Activated CD4-positive, alpha-beta memory T cell treated with anti-CD3 and anti-CD28 coated beads, Interleukin-2, amount 10 ng/mL, durations not matched to agents 7 days and 5 days (primary cell): ENCODE measurements at regions of chr2 and their contacts with region 1.

Region 1: DNA sequence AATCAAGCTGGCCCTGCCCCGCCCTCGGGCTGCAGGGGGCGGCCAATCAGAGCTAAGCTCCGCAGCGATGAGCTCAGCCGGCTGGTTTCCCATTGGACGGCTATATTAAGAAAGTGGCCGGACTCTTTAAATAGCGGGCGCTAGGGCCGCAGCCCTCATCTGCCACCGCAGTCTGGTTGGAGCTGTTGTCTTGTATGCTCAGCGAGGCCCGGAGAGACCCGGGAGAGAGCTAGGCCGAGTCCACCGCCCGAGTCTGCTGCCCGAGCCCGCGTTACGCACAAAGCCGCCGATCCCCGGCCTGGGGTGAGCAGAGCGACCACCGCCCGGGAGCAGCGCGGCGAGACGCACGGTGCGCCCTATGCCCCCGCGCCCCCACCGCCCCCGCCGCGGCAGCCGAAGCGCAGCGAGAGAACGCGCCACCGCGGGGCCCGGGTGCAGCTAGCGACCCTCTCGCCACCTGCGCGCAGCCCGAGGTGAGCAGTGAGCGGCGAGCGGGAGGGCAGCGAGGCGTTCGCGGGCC is at the start of gene RHOB:
- DNase-seq: peak; percentile 93
- H3K4me3 Mint-ChIP-seq: peak within 1 kb of the TSS; percentile 74
- H3K27ac Mint-ChIP-seq: no peak within 1 kb of the TSS
- H3K4me1 Mint-ChIP-seq: peaks cover 10% of the 10 kb centered on the region
- H3K27me3 Mint-ChIP-seq: peaks cover 41% of the 10 kb centered on the region
- total RNA-seq, gene RHOB: 14.0 to 14.4 TPM

Region 2: GRCh38 chr2:20424300-20425290 is 22.4 kb before region 1 on chr2:
- CTCF ChIA-PET with region 1: interaction called, 17 read pairs
- POLR2A ChIA-PET with region 1: interaction called, 7 read pairs
- DNase-seq: peak; percentile 58
- H3K4me3 Mint-ChIP-seq: peak overlapping the region; percentile 3
- H3K27ac Mint-ChIP-seq: peak overlapping the region; percentile 68
- H3K4me1 Mint-ChIP-seq: peaks cover 44% of the 10 kb centered on the region
- H3K27me3 Mint-ChIP-seq: peaks cover 4% of the 10 kb centered on the region

Region 3: GRCh38 chr2:20474757-20475566 is 28.0 kb after region 1 on chr2:
- CTCF ChIA-PET with region 1: no interaction called
- POLR2A ChIA-PET with region 1: no interaction called
- DNase-seq: no peak
- H3K4me3 Mint-ChIP-seq: no peak overlapping the region
- H3K27ac Mint-ChIP-seq: no peak overlapping the region
- H3K4me1 Mint-ChIP-seq: no peaks in the 10 kb centered on the region
- H3K27me3 Mint-ChIP-seq: peaks cover 4% of the 10 kb centered on the region

Region 4: DNA sequence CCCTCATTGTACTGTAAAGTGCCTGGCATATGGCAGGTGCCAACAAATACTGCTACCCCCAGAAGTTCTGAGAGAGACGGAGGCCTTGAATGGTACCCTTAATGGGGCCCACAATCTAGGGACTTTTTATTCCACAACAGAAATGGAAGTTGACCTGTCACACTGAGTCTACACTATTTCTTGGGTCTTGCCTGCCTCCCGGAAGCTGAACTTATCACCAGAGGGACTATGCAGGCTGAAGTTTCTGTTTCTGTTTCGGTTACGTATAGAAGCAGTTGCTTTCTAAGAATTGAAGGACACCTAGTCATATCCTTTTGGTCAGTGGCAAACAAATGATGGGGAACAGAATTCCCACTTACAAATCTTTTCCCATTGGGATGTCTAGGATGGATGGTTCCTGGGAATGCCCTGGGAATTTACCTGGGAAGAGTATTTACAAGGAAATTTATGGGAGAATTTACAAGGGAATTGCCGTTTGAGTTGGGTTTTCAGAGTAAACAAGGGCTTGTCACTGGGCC is 129.7 kb after region 1 on chr2:
- CTCF ChIA-PET with region 1: interaction called, 4 read pairs
- POLR2A ChIA-PET with region 1: interaction called, 11 read pairs
- DNase-seq: peak; percentile 60
- H3K4me3 Mint-ChIP-seq: peak overlapping the region; percentile 65
- H3K27ac Mint-ChIP-seq: peak overlapping the region; percentile 97
- H3K4me1 Mint-ChIP-seq: peaks cover 78% of the 10 kb centered on the region
- H3K27me3 Mint-ChIP-seq: no peaks in the 10 kb centered on the region

Region 5: GRCh38 chr2:20642055-20642971 is 195.3 kb after region 1 on chr2:
- CTCF ChIA-PET with region 1: interaction called, 52 read pairs
- POLR2A ChIA-PET with region 1: interaction called, 8 read pairs
- DNase-seq: peak; percentile 79
- H3K4me3 Mint-ChIP-seq: no peak overlapping the region
- H3K27ac Mint-ChIP-seq: no peak overlapping the region
- H3K4me1 Mint-ChIP-seq: no peaks in the 10 kb centered on the region
- H3K27me3 Mint-ChIP-seq: no peaks in the 10 kb centered on the region